Dendritic cell treated with granulocyte-macrophage colony-stimulating factor and Interleukin-4, amounts not matched to agents 40 ng/mL and 50 ng/mL, for 4 days (primary cell): ENCODE measurements at regions of chr14 and their contacts with region 1.

Region 1: DNA sequence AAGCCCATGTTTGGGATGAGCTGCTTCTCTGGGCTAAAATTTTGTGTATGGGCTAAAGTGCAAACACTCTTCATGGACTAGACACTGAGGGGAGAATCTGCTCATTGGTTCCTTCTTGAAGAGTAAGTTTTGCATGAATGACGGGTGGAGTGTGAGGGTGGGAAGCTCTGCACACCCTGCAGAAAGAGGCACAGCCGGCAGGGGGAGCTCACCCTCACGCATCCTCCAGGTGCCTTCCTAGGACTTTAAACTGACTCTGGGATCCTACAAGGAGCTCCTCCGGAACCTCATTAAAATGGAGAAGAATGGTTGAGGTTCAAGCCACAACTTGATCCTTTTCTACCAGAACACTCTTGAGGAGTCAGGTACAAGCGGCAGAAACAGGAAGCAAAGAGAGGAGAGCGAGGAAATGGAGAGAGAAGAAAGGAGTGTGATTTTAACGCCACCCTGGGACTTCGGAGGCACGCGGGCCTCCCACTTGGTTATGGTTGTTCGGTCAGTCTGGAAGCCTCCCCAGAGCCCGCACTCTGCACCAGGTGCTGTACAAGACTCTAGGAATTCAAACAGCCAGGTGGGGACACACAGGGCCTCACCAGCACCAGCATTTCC is 87.5 kb downstream of the SETD3 start:
- H3K4me3 Mint-ChIP-seq: no peak overlapping the region
- H3K27ac Mint-ChIP-seq: no peak overlapping the region
- H3K4me1 Mint-ChIP-seq: no peaks in the 10 kb centered on the region
- H3K27me3 Mint-ChIP-seq: no peaks in the 10 kb centered on the region

Region 2: GRCh38 chr14:99415496-99416281 is 22.5 kb after region 1 on chr14:
- intact Hi-C with region 1: loop called (anchors 1 kb)
- H3K4me3 Mint-ChIP-seq: no peak overlapping the region
- H3K27ac Mint-ChIP-seq: no peak overlapping the region
- H3K4me1 Mint-ChIP-seq: no peaks in the 10 kb centered on the region
- H3K27me3 Mint-ChIP-seq: no peaks in the 10 kb centered on the region

Region 3: GRCh38 chr14:99441157-99441870 is 48.2 kb after region 1 on chr14:
- intact Hi-C with region 1: no loop called
- H3K4me3 Mint-ChIP-seq: no peak overlapping the region
- H3K27ac Mint-ChIP-seq: no peak overlapping the region
- H3K4me1 Mint-ChIP-seq: peaks cover 13% of the 10 kb centered on the region
- H3K27me3 Mint-ChIP-seq: no peaks in the 10 kb centered on the region